Right cardiac atrium (tissue), 5 donors: ENCODE measurements at regions of chr9 and their contacts with region 1.

Region 1: DNA sequence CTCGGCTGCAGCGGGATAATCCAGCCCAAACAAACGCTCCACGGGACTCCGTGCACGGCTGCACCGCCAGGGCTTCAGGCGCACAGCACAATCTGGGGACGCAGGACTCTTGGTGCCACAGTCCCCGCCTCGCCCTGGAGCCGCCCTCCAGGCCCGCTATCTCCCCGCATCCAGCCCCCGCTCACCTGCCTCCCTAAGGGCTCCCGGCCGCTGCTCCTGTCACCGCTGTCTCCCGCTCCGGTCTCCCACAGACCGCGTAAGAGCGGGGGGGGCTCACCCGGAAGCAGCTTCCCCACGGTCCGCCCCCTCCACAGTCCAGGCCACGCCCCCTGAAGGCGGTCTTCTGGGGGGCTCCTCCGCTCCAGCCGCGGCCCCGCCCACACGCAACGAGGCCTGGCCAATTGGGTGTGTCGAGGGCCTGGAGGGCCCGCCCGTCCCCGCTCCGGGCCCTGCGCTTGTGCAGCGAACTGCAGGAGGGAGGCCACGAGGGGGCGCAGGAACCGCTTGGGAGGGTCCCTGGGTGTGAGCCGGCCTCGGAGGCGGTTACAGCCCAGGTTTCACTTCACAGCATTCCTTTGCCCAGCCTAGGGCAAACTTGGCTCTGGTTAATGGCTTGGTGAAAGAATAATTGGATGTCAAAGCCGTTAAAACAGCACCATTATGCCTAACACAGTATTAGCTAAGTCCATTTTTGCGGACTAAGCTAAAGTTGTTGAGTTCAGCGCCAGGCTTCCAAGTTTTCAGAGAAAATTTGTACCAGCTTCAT is at the start of gene ALAD:
- DNase-seq: peak; percentile 100
- ATAC-seq: peak; percentile 100
- H3K4me3 ChIP-seq: peak within 1 kb of the TSS; percentile 75
- H3K27ac ChIP-seq: peak within 1 kb of the TSS; percentile 13
- H3K4me1 ChIP-seq: peaks cover 6% of the 10 kb centered on the region
- H3K27me3 ChIP-seq: no peaks in the 10 kb centered on the region
- total RNA-seq, gene ALAD: 29.9 to 43.6 (median 42.1) TPM

Region 2: DNA sequence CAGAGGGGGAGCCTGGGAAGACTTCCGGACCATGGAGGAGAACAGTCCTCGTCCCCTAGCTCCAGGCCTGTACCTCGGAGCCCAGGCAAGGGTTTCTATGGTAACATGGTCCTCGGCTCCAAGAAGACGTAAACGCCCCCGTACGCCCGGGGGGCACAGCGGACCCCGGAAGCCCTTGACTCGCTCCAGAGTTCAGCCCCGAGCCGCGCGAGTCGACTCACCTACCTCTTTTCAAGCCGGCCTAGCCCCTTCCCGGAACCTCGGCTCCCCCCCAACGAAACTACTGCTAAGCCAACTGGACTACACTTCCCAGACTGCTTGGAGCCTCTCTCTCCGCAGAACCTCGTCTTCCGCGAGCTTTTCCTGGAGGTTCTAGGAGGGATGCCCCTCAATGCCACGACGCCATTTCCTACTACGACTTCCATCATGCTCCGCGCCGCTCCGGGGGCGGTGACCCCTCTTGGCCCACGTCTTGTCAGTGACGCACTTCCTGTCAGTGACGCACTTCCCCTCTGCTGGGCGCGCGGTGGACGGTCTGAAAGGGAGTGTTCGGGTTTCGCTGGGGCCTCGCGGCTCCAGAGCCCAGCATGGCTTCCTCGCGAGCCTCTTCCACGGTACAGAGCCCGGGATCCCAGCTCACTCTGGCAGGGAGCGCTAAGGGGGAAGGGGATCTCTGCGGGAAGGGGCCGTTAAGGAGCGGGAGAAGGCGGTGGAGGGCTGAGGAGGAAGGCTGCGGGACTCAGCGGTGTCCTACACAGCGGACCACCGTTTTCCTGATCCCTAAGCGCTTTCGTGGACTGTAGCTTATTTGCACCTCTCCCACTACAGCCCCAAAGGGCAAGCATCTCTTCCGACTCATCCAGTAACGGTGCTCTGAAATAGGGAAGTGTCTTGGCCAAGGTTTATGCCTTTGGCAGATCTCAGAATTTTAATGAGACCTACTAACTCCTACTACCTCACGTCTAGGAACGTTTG is 125.8 kb before region 1 on chr9 and contains the starts of genes CDC26 and PRPF4:
- intact Hi-C with region 1: loop called in 1 of 4 experiments (anchors 10 kb)
- DNase-seq: peak; percentile 97 to 98 (median 98)
- ATAC-seq: peak; percentile 98 to 99
- H3K4me3 ChIP-seq: peak within 1 kb of the TSS; percentile 81
- H3K27ac ChIP-seq: peak within 1 kb of the TSS; percentile 91
- H3K4me1 ChIP-seq: no peaks in the 10 kb centered on the region
- H3K27me3 ChIP-seq: no peaks in the 10 kb centered on the region
- total RNA-seq, gene CDC26: 29.0 to 39.1 (median 37.0) TPM
- total RNA-seq, gene PRPF4: 10.0 to 12.8 (median 10.7) TPM

Region 3: DNA sequence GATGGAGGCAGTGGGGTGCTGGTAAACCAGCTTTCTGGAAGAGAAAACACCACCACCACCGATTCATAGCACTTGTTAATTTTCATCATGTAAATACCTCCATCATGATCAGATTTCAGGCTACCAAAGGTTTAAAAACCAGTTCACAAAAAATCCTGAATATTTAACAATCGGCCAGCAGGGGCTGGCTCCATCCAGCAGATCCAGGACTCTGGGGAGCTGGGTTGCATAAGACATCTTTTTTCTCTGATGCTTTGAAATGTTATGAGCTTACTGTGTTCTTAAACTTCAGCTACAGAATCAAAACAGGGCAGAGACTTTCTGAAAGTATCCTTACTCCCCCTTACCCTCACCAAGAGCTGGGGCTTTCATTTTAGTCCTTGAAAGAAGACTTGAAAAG is 83.4 kb before region 1 on chr9:
- intact Hi-C with region 1: loop called in 3 of 4 experiments (anchors 10 kb)
- DNase-seq: no peak
- ATAC-seq: peak in 1 of 2 donors; percentile 50
- H3K4me3 ChIP-seq: no peak overlapping the region
- H3K27ac ChIP-seq: no peak overlapping the region
- H3K4me1 ChIP-seq: no peaks in the 10 kb centered on the region
- H3K27me3 ChIP-seq: no peaks in the 10 kb centered on the region

Region 4: DNA sequence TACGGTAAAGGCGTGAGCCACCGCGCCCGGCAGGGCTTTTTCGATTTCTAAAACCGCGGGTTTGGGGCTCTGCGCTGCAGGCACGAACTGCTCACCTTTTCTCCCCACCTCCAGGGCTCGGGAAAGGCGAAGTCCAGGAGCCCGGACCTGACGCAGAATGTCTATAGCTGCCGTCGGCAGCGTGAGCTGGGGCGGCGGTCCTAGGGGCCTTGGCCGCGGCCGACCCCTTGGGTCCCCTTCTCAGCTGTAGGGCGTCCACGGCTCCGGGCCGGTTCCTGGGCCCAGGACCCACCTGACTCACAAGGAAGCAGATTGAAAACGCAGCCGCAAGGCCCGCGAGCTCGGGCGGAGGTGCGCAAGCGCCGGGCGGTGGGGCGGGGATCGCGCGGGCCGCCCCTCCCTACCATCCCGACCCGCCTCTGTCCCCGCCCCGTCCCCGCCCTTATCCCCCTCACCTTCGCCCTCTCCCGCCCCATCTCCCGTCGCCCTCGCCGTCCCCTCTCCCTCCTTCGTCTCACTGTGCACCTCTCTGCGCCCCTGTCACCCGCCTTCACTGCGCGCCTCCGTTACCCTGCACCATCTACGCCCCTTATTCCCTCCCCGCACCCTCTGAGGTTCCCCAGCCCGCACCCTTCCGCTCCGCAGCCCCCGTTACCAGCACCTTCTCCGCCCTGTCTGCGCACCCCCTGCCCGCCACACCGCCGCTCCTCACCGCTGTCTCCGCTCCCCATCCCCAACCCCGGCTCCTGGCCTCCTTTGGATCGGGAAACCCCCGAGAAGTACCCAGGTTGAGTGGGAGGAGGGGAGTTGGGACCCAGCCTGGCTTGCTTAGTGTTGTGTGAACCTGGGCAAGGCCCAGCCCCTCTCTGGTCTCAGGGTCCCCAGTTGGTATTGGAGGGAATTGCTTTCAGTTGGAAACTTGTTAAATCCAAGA is 24.3 kb before region 1 on chr9 and contains the start of gene HDHD3:
- intact Hi-C with region 1: no loop called
- DNase-seq: peak; percentile 80 to 89 (median 82)
- ATAC-seq: peak; percentile 91 to 96
- H3K4me3 ChIP-seq: peak within 1 kb of the TSS; percentile 58
- H3K27ac ChIP-seq: peak within 1 kb of the TSS; percentile 10
- H3K4me1 ChIP-seq: peaks cover 2% of the 10 kb centered on the region
- H3K27me3 ChIP-seq: no peaks in the 10 kb centered on the region
- total RNA-seq, gene HDHD3: 11.0 to 20.0 (median 15.9) TPM